CD14-positive monocyte (primary cell): ENCODE measurements at regions of chr17 and their contacts with region 1.

Region 1: DNA sequence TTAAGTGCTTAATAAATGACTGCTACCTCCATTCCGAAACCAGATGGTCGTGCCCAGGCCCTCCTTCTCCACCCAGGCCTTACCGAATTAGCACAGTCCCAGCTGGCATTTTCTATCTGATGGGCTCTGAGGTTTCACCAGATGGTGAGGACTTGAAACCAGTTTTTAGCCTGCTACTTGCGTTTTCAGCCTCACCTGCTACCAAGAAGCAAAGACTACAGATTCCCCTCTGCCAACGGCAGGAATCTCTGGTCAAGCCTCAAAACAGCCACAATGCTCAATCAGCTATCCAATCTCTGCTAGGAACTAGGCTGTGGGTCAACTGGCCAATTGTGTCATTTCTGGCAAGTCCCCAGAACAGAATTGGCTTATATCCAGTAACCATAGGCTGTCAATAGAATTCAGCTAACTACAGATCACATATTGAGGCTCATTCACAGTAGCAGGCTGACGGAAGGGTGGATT is 11.7 kb downstream of the PECAM1 start:
- DNase-seq: no peak
- H3K4me3 ChIP-seq: no peak overlapping the region
- H3K4me3 Mint-ChIP-seq: no peak overlapping the region
- H3K27ac ChIP-seq: peak overlapping the region in 1 of 2 donors; percentile 70
- H3K27ac Mint-ChIP-seq: peak overlapping the region in 6 of 7 donors; percentile 19 to 76 (median 60)
- H3K4me1 ChIP-seq: peaks cover 17 to 28% of the 10 kb centered on the region in 2 donors
- H3K4me1 Mint-ChIP-seq: peaks cover 26% of the 10 kb centered on the region
- H3K27me3 ChIP-seq: no peaks in the 10 kb centered on the region
- H3K27me3 Mint-ChIP-seq: no peaks in the 10 kb centered on the region
- CTCF ChIP-seq: no peak

Region 2: DNA sequence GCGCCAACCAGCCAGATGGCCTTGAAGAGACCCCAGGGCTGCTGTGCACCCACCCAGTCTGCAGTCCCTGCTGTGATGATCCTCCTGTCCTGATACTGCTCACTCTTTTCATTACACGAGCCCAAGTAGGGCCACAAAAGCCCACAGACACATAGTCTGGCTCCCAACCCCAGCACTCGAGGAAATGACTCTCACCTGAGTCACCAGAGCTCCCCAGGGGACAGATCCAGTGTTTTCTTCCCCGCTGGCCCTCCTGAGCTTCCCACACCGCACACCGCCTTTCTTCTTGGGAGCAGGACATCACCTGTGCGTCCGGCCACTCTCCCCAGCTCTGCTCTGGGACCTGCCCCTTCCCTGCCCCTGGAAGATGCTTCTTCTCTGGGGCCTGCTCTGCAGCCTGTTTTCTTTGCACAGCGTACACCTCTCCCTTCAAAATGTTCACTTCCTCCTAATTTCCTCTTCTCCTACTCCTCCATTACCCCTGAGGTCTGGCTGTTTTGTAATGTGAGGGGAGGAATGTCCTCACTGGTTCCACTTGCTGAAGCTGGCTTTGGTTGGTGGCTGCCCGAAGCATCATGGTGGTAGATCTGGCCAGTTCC is 404.2 kb before region 1 on chr17:
- intact Hi-C with region 1: no loop called
- DNase-seq: no peak
- H3K4me3 ChIP-seq: no peak overlapping the region
- H3K4me3 Mint-ChIP-seq: no peak overlapping the region
- H3K27ac ChIP-seq: no peak overlapping the region
- H3K27ac Mint-ChIP-seq: peak overlapping the region in 2 of 7 donors; percentile 2 to 42
- H3K4me1 ChIP-seq: no peaks in the 10 kb centered on the region
- H3K4me1 Mint-ChIP-seq: peaks cover 10% of the 10 kb centered on the region
- H3K27me3 ChIP-seq: no peaks in the 10 kb centered on the region
- H3K27me3 Mint-ChIP-seq: peaks cover 2 to 11% (median 4%) of the 10 kb centered on the region in 3 donors
- CTCF ChIP-seq: no peak

Region 3: GRCh38 chr17:64411999-64412771 is 33.3 kb after region 1 on chr17:
- intact Hi-C with region 1: loop called (anchors 5 kb)
- DNase-seq: peak; percentile 76 to 87 (median 85)
- H3K4me3 ChIP-seq: peak overlapping the region; percentile 50 to 83 (median 64)
- H3K4me3 Mint-ChIP-seq: peak overlapping the region; percentile 97 to 100
- H3K27ac ChIP-seq: peak overlapping the region; percentile 80 to 86
- H3K27ac Mint-ChIP-seq: peak overlapping the region; percentile 93 to 99 (median 96)
- H3K4me1 ChIP-seq: peaks cover 44 to 71% of the 10 kb centered on the region in 2 donors
- H3K4me1 Mint-ChIP-seq: peaks cover 59% of the 10 kb centered on the region
- H3K27me3 ChIP-seq: no peaks in the 10 kb centered on the region
- H3K27me3 Mint-ChIP-seq: peaks cover 0 to 2% (median 0%) of the 10 kb centered on the region in 3 donors
- CTCF ChIP-seq: no peak